Heart left ventricle (tissue), 16 donors: ENCODE measurements at regions of chr11 and their contacts with region 1.

Region 1: DNA sequence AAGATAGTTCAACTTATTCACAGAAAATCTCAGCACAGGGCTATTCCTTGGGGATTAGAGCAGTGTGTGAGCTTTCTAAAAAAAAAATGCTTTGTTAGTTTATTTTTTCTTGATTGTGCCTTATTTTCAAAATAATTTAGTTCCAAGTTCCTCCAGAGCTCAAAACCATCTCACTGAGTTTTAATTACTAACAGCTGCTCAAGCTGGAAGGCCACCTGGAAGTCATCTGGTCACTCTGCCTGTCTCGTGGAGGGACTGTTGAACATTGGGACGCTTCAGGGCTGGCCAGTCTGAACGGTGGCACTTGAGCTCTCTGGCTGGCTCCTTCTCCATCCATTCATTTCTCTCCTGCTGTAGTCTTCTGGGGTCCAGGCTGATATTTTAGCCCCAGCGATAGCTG is 4.0 kb downstream of the OR51E1 start:
- DNase-seq: peak in 1 of 5 donors; percentile 38
- ATAC-seq: no peak
- H3K4me3 ChIP-seq: peak overlapping the region in 5 of 12 donors; percentile 7 to 61 (median 21)
- H3K27ac ChIP-seq: peak overlapping the region in 10 of 12 donors; percentile 1 to 64 (median 34)
- H3K4me1 ChIP-seq: peaks cover 11 to 57% (median 27%) of the 10 kb centered on the region in 12 donors
- H3K27me3 ChIP-seq: no peaks in the 10 kb centered on the region
- CTCF ChIP-seq: no peak
- POLR2A ChIP-seq: no peak

Region 2: DNA sequence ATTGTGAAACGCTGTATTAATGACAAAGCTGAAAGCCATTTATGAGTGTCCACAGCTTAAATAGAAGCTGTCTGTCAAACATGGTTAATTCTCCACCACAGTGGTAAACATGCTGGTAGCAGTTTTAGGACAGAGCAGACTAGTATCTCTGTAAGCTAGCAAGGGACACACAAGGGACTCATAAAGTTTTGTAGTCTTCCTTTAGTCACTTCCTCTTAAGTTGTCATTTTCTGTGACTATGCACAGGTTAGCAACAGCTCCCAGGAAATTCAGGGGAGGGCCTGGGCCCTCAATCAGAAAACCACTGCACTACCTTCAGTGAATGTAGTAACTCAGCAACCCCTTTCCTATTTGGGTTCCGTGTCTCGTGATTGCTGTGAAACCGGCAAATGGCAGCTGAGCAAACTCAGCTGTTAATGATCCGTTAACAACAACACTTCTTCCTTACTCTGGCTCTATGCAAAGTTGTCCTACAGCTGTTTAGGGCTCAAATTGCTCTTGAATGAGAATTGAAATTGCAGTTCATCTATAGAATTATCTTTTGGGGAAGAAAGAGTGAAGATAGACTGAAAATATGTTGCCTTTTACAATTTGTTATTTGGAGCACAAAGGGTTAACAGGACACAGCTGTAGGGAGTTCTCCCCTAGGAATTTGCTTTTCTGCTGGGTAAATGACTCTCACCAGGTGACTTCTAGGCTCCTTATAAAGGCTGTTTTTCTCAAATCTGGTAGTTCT is 56.5 kb after region 1 on chr11 and contains the start of gene MMP26:
- intact Hi-C with region 1: loop called in 1 of 10 experiments (anchors 5 kb)
- DNase-seq: no peak
- ATAC-seq: no peak
- H3K4me3 ChIP-seq: no peak within 1 kb of the TSS
- H3K27ac ChIP-seq: peak within 1 kb of the TSS in 1 of 12 donors; percentile 28
- H3K4me1 ChIP-seq: peaks cover 0 to 7% (median 0%) of the 10 kb centered on the region in 12 donors
- H3K27me3 ChIP-seq: no peaks in the 10 kb centered on the region
- CTCF ChIP-seq: no peak
- POLR2A ChIP-seq: no peak
- total RNA-seq, gene MMP26: not detected